CD14-positive monocyte (primary cell): ENCODE measurements at regions of chr12 and their contacts with region 1.

Region 1: GRCh38 chr12:47328831-47329545 is 249.2 kb upstream of the AMIGO2 start:
- DNase-seq: no peak
- H3K4me3 ChIP-seq: no peak overlapping the region
- H3K4me3 Mint-ChIP-seq: no peak overlapping the region
- H3K27ac ChIP-seq: no peak overlapping the region
- H3K27ac Mint-ChIP-seq: no peak overlapping the region
- H3K4me1 ChIP-seq: no peaks in the 10 kb centered on the region
- H3K4me1 Mint-ChIP-seq: peaks cover 1% of the 10 kb centered on the region
- H3K27me3 ChIP-seq: no peaks in the 10 kb centered on the region
- H3K27me3 Mint-ChIP-seq: peaks cover 2 to 5% (median 4%) of the 10 kb centered on the region in 3 donors
- CTCF ChIP-seq: no peak

Region 2: DNA sequence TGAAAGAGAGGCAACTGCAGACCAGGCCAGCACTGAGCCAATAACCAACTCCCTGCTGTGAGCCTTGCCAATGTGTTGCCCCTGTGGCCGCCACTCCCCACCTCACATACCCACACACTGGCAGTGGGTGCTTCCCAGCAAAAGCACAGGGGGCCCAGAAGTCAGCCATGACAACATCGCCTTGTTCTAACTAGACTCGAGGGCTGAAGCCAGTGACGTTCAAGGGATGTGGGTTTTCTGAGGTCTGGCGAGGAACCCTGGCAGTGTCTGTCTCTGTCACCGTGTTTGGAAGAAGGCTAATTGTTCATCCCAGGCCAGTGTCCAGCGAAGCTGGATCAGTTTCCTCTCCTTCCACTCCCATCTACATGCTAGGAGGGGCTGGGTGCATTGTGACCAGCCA is 62.6 kb after region 1 on chr12:
- intact Hi-C with region 1: loop called in 1 of 2 experiments (anchors 5 kb)
- DNase-seq: no peak
- H3K4me3 ChIP-seq: no peak overlapping the region
- H3K4me3 Mint-ChIP-seq: no peak overlapping the region
- H3K27ac ChIP-seq: no peak overlapping the region
- H3K27ac Mint-ChIP-seq: peak overlapping the region in 1 of 7 donors; percentile 11
- H3K4me1 ChIP-seq: peaks cover 13 to 16% of the 10 kb centered on the region in 2 donors
- H3K4me1 Mint-ChIP-seq: peaks cover 32% of the 10 kb centered on the region
- H3K27me3 ChIP-seq: peaks cover 0 to 5% of the 10 kb centered on the region in 2 donors
- H3K27me3 Mint-ChIP-seq: peaks cover 0 to 3% (median 2%) of the 10 kb centered on the region in 3 donors
- CTCF ChIP-seq: no peak